Mammary epithelial cell (primary cell): ENCODE measurements at regions of chr7 and their contacts with region 1.

Region 1: DNA sequence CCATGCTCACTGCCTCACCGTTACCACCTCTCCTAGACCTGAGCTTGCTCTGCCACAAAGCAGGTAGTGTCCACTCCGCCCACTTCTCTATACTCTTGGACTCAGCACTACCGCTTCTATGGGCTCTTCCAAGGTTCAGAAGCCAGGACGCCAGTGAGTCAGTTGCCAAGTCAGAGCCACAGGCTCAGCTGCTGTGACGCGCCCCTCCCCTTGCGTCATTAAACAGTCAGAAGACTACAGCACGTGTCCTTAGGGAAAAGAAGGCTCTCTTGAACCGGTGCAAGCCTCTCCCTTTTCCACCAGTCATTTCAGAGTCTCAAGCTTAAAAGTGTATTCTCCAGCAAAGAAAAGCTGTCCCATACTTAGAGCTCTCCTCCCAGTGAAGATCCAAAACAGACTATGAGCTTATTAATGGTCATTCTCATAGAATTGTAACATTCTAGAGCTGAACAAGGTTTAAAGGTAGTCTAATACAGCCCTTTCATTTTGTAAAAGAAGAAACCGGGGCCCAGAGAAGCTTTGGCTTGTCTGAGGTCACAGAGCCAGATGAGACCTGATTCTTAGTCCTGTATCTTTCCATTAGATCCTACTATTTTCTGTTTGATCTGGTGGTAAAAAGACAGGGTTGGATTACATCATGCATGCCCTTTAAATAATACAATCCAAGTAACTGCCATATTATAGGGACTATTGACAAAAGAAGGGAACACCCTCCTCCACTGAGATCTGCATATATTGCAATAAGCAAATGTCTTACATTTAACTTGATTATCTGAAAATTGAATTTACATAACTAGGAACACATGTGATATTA is 40.9 kb upstream of the MET start:
- DNase-seq: peak; percentile 100
- H3K4me3 ChIP-seq: no peak overlapping the region
- H3K27ac ChIP-seq: peak overlapping the region; percentile 95
- H3K4me1 ChIP-seq: peaks cover 56% of the 10 kb centered on the region
- H3K27me3 ChIP-seq: no peaks in the 10 kb centered on the region
- CTCF ChIP-seq: no peak

Region 2: DNA sequence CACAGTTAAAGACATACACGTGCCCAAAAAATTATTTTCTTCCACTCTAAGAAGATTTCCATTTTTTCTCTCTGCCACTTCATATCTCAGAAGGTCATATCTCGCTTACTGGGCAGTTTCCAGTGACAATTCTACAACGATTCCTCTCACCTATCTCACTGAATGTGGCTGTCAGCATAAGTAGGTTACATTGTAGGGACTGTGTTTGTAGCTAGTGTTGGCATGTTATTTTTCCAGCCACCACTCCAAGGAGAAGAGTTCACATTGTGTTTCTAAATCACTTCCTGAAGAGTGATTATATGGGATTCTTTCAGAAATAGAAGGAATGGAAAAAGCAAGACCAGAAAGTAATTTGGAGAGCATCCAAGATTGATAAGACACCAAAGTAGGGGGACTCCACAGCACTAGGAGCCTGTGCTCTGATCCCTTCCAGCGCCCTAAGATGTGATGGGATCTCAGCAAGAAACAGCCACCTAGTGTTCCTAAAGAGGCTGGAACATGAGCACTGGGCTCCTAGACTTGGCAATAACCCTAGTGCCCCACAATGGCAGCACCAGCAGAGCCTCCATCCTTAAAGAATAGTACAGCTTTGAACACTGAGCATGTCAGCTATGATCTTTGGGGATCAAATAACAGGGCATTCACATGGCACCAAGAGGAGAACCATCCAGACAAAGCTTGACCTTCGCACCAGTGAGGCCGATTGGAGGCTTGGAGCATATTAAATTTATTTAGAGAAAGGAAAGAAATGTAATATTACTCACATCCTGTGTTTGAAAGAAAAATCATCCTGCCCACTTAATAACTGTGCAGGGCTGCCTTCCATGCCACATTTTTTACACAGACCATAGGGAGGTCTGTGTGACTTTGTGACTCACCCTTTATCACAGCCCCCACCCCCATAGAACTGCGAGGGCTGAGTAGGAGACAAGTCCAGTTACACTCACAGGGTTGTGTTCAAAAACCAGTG is 54.5 kb before region 1 on chr7:
- CTCF ChIA-PET with region 1: no interaction called
- dilution Hi-C with region 1: loop called (anchors 5 kb)
- in situ Hi-C with region 1: no loop called
- intact Hi-C with region 1: no loop called
- DNase-seq: peak; percentile 84
- H3K4me3 ChIP-seq: no peak overlapping the region
- H3K27ac ChIP-seq: peak overlapping the region; percentile 48
- H3K4me1 ChIP-seq: peaks cover 31% of the 10 kb centered on the region
- H3K27me3 ChIP-seq: no peaks in the 10 kb centered on the region
- CTCF ChIP-seq: no peak

Region 3: GRCh38 chr7:116653204-116653603 is 22.1 kb after region 1 on chr7:
- CTCF ChIA-PET with region 1: no interaction called
- dilution Hi-C with region 1: no loop called
- in situ Hi-C with region 1: no loop called
- intact Hi-C with region 1: loop called (anchors 1 kb)
- DNase-seq: peak; percentile 93
- H3K4me3 ChIP-seq: peak overlapping the region in 1 of 3 experiments; percentile 17
- H3K27ac ChIP-seq: peak overlapping the region; percentile 99
- H3K4me1 ChIP-seq: peaks cover 31% of the 10 kb centered on the region
- H3K27me3 ChIP-seq: no peaks in the 10 kb centered on the region
- CTCF ChIP-seq: no peak

Region 4: DNA sequence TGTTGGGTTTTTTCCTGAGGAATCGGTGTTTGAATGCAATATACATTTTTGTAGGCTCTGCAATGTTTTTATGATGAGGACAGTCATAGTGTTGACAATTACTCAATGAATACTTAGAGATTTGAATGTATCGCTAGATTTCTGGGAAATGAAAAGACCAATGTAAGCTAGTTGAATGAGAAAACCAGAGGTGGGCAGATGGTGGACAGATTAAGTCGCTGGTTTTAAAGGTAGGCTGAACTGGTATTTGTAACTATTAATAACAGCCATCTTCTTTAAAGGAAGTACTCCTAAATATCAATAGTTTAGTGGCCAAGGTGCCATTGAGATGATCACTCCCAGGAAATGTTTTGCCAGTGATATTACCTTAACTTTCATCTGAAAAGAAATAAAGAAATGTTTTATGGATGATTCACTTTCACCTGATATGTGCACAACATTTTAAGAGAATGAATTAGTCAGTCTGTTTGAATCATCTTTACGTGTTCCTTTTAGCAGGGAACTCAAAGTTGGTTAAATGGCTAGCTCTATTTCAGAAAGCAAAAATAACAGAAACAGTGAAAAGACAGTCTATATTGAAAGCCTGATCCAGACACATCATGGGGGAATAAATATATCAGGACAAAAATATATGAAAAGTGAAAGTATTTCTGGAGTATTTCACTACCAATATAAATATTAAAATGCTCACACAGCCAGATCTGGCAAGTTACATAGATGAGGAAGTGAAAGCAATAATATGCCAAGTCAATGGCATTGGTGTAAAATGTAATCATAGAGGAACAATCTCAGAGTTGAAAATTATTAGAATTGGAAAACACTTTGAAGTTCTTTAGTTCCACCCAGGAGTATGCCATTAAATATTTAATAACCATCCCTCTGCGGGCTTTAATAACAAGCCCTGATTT is 61.5 kb after region 1 on chr7:
- CTCF ChIA-PET with region 1: no interaction called
- dilution Hi-C with region 1: no loop called
- in situ Hi-C with region 1: no loop called
- intact Hi-C with region 1: loop called (anchors 2 kb)
- DNase-seq: peak; percentile 83
- H3K4me3 ChIP-seq: peak overlapping the region in 1 of 3 experiments; percentile 7
- H3K27ac ChIP-seq: peak overlapping the region; percentile 93
- H3K4me1 ChIP-seq: peaks cover 58% of the 10 kb centered on the region
- H3K27me3 ChIP-seq: no peaks in the 10 kb centered on the region
- CTCF ChIP-seq: no peak

Region 5: DNA sequence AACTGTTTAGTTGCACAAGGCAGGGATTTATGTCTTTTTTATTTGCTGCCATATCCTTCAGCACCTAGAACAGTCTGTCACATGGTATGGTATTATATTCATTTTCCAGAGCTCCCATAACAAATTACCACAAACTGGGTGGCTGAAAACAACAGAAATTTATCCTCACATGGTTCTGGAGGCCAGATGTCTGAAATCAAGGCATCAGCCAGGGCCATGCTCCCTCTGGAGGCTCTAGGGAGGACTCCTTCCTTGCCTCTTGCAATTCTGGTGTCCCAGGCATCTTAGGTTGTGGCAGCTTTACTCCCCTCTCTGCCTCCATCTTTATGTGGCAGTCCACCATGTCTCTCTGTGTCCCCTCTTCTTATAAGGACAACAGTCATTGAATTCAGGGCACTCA is 83.9 kb after region 1 on chr7:
- CTCF ChIA-PET with region 1: no interaction called
- dilution Hi-C with region 1: loop called (anchors 5 kb)
- in situ Hi-C with region 1: no loop called
- intact Hi-C with region 1: loop called (anchors 5 kb)
- DNase-seq: no peak
- H3K4me3 ChIP-seq: no peak overlapping the region
- H3K27ac ChIP-seq: no peak overlapping the region
- H3K4me1 ChIP-seq: peaks cover 27% of the 10 kb centered on the region
- H3K27me3 ChIP-seq: no peaks in the 10 kb centered on the region
- CTCF ChIP-seq: peak in 1 of 2 donors; percentile 21